PC-3 (cell line): ENCODE measurements at regions of chr7 and their contacts with region 1.

Region 1: GRCh38 chr7:142811154-142811737 is 40.5 kb downstream of the PRSS2 start:
- DNase-seq: peak; percentile 74
- ATAC-seq: no peak
- H3K4me3 ChIP-seq: no peak overlapping the region
- H3K27ac ChIP-seq: peak overlapping the region; percentile 98
- H3K4me1 ChIP-seq: peaks cover 79% of the 10 kb centered on the region
- H3K27me3 ChIP-seq: no peaks in the 10 kb centered on the region
- CTCF ChIP-seq: peak; percentile 84

Region 2: DNA sequence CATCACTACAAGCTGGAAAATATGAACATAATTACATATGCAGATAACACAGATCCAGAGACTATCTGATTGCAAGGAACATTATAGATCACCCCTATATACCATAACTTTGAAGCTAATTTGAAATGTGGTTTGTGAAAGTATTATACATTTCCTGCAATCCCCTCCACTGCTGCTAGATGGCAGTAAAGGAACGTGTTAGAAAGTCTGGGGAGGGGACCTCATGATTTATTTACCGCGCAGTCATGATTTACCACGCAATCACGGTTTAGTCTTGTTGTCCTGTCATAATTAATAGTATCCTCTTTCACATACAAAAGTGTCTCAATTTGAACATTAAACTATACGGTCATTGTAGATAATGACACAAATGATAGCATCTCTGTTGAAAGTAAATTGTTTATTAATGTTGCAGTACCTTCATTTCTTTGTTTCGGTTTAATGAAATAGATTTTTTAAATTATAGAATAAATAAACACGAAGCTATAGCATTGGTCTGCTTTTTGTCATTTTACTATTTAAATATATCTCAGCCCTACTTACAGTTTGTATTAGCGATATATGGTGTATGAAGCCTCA is 207.3 kb before region 1 on chr7:
- CTCF ChIA-PET with region 1: interaction called, 9 read pairs
- POLR2A ChIA-PET with region 1: no interaction called
- intact Hi-C with region 1: loop called (anchors 5 kb)
- DNase-seq: peak; percentile 84
- ATAC-seq: peak; percentile 75
- H3K4me3 ChIP-seq: peak overlapping the region; percentile 74
- H3K27ac ChIP-seq: no peak overlapping the region
- H3K4me1 ChIP-seq: peaks cover 8% of the 10 kb centered on the region
- H3K27me3 ChIP-seq: no peaks in the 10 kb centered on the region
- CTCF ChIP-seq: peak; percentile 93

Region 3: DNA sequence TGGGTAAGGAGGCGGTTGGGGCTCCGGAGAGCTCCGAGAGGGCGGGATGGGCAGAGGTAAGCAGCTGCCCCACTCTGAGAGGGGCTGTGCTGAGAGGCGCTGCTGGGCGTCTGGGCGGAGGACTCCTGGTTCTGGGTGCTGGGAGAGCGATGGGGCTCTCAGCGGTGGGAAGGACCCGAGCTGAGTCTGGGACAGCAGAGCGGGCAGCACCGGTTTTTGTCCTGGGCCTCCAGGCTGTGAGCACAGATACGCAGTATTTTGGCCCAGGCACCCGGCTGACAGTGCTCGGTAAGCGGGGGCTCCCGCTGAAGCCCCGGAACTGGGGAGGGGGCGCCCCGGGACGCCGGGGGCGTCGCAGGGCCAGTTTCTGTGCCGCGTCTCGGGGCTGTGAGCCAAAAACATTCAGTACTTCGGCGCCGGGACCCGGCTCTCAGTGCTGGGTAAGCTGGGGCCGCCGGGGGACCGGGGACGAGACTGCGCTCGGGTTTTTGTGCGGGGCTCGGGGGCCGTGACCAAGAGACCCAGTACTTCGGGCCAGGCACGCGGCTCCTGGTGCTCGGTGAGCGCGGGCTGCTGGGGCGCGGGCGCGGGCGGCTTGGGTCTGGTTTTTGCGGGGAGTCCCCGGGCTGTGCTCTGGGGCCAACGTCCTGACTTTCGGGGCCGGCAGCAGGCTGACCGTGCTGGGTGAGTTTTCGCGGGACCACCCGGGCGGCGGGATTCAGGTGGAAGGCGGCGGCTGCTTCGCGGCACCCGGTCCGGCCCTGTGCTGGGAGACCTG is 14.4 kb before region 1 on chr7:
- CTCF ChIA-PET with region 1: interaction called, 8 read pairs
- POLR2A ChIA-PET with region 1: interaction called, 9 read pairs
- intact Hi-C with region 1: loop called (anchors 1 kb)
- DNase-seq: peak; percentile 23
- ATAC-seq: peak; percentile 42
- H3K4me3 ChIP-seq: peak overlapping the region; percentile 83
- H3K27ac ChIP-seq: peak overlapping the region; percentile 99
- H3K4me1 ChIP-seq: peaks cover 65% of the 10 kb centered on the region
- H3K27me3 ChIP-seq: no peaks in the 10 kb centered on the region
- CTCF ChIP-seq: no peak

Region 4: GRCh38 chr7:142835487-142835886 is 24.2 kb after region 1 on chr7:
- CTCF ChIA-PET with region 1: interaction called, 15 read pairs
- POLR2A ChIA-PET with region 1: interaction called, 5 read pairs
- intact Hi-C with region 1: loop called (anchors 1 kb)
- DNase-seq: peak; percentile 45
- ATAC-seq: 0 out of 2 replicates have a peak, but pooled peaks have one; percentile 11
- H3K4me3 ChIP-seq: no peak overlapping the region
- H3K27ac ChIP-seq: peak overlapping the region; percentile 39
- H3K4me1 ChIP-seq: peaks cover 38% of the 10 kb centered on the region
- H3K27me3 ChIP-seq: no peaks in the 10 kb centered on the region
- CTCF ChIP-seq: peak; percentile 59

Region 5: DNA sequence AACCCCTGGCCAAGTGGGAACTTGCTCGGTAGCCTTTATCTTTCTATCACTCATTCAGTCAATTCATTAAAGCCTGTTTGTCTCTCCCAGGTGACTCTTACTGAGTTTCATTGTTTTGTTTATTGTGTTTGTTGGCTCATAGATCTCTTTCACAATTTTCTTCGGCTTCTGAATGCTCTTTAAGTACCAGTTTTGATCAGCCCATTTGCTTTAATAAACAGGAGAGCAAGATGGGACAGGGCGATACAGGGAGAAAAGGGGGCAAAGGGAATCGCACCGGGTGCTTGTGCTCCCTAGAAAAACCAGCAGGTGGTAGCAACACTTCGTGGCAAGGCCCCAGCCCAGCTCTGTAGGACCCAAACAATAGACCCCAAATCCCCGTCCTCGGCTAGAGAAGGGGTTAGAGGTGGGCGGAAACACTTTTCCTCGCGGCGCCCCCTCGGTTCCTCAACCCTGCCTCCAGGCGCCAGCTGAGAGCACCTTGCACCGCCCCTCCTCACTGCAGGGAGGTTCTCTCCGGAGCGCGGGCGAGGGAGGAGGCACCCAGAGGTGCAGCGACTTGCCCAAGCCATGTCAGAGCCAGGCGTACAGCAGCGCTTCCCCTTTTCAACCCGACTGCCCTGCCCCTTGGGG is 42.6 kb after region 1 on chr7:
- CTCF ChIA-PET with region 1: interaction called, 6 read pairs
- POLR2A ChIA-PET with region 1: interaction called, 4 read pairs
- intact Hi-C with region 1: loop called (anchors 1 kb)
- DNase-seq: peak; percentile 70
- ATAC-seq: peak; percentile 78
- H3K4me3 ChIP-seq: peak overlapping the region; percentile 87
- H3K27ac ChIP-seq: peak overlapping the region; percentile 58
- H3K4me1 ChIP-seq: peaks cover 19% of the 10 kb centered on the region
- H3K27me3 ChIP-seq: no peaks in the 10 kb centered on the region
- CTCF ChIP-seq: peak; percentile 83

Region 6: DNA sequence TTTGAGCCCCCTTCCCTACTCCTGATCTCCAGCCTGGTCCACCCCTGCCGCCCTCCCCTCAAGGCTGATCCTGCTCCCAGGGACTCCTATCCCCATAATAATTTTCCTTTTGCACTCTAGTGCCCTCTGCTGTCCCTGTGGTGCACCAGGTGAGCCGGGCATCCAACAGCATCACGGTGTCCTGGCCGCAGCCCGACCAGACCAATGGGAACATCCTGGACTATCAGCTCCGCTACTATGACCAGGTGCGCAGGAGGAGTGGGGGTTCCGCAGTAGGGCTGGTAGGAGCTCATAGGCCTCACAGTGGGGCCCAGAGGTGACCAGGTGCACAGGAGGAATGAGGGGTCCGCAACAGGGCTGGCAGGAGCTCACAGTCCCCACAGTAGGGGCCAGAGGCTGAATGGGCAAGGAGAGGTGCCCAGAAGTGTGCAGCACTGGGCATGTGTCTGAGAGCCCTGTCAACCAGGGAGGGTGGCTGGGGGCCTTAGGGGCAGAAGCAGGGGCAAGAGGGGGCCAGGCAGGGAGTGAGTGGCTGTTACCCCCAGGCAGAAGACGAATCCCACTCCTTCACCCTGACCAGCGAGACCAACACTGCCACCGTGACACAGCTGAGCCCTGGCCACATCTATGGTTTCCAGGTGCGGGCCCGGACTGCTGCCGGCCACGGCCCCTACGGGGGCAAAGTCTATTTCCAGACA is 55.3 kb after region 1 on chr7:
- CTCF ChIA-PET with region 1: no interaction called
- POLR2A ChIA-PET with region 1: no interaction called
- intact Hi-C with region 1: loop called (anchors 5 kb)
- DNase-seq: peak; percentile 73
- ATAC-seq: peak; percentile 92
- H3K4me3 ChIP-seq: no peak overlapping the region
- H3K27ac ChIP-seq: no peak overlapping the region
- H3K4me1 ChIP-seq: no peaks in the 10 kb centered on the region
- H3K27me3 ChIP-seq: no peaks in the 10 kb centered on the region
- CTCF ChIP-seq: peak; percentile 81